ENCODE measurements at regions of chr5 and their contacts with region 1.

Region 1: GRCh38 chr5:130109152-130109551 is 204.9 kb downstream of the CHSY3 start:
- DNase-seq: peak; percentile 34
- ATAC-seq: peak; percentile 69; the same call in 1 of the 2 replicates
- H3K4me3 ChIP-seq: no peak overlapping the region
- H3K27ac ChIP-seq: no peak overlapping the region
- H3K4me1 ChIP-seq: no peaks in the 10 kb centered on the region
- H3K27me3 ChIP-seq: no peaks in the 10 kb centered on the region
- CTCF ChIP-seq: peak; percentile 55 to 76 (median 62); a peak in 5 of 6 replicates
- POLR2A ChIP-seq: no peak
- RAD21 ChIP-seq: peak; percentile 79

Region 2: DNA sequence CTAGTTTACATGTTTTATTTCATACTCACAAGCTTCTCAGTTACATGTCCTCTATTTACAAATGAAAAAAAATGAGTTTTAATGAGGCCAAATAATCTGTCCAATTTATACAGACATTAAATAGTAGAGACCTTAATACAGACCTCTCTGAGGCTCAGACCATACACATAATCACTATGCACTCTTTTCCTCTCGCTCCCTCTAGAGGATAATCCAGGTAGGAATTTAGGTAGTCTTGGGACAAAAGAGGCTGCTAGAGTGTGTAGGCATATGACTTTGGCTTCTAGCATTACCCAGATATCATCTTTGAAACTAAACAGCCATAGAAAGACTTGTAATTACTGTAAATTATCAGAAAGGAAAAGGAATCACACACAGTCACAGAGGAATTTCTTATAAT is 611.2 kb after region 1 on chr5:
- CTCF ChIA-PET with region 1: no interaction called
- POLR2A ChIA-PET with region 1: no interaction called
- RAD21 ChIA-PET with region 1: no interaction called
- intact Hi-C with region 1: loop called (anchors 1 kb)
- DNase-seq: peak; percentile 45
- ATAC-seq: peak; percentile 100
- H3K4me3 ChIP-seq: no peak overlapping the region
- H3K27ac ChIP-seq: no peak overlapping the region
- H3K4me1 ChIP-seq: no peaks in the 10 kb centered on the region
- H3K27me3 ChIP-seq: no peaks in the 10 kb centered on the region
- CTCF ChIP-seq: peak; percentile 56 to 74 (median 69); a peak in 5 of 6 replicates
- POLR2A ChIP-seq: no peak
- RAD21 ChIP-seq: peak; percentile 88

Region 3: DNA sequence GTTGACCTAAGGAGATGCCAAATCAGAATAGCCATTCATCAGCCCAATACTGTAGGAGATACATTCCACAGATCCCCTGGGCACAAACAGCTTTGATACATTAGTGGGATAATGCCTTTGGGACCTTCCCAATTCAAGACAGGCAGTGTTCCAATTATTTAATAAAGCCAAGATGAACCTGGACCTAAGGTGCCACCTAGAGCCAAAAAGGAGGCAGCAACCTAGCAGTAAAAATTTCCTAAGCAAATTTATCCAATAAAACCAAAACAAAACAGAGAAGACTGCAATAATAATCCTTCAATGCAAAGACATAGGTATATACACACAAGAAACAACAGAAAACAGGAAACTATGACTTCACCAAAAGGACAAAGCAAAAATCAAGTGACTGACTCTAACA is 802.9 kb after region 1 on chr5:
- CTCF ChIA-PET with region 1: no interaction called
- POLR2A ChIA-PET with region 1: no interaction called
- RAD21 ChIA-PET with region 1: no interaction called
- intact Hi-C with region 1: loop called (anchors 2 kb)
- DNase-seq: peak; percentile 19
- ATAC-seq: peak; percentile 71
- H3K4me3 ChIP-seq: no peak overlapping the region
- H3K27ac ChIP-seq: no peak overlapping the region
- H3K4me1 ChIP-seq: no peaks in the 10 kb centered on the region
- H3K27me3 ChIP-seq: no peaks in the 10 kb centered on the region
- CTCF ChIP-seq: peak; percentile 54 to 72 (median 63); a peak in 5 of 6 replicates
- POLR2A ChIP-seq: no peak
- RAD21 ChIP-seq: peak; percentile 85